ENCODE measurements at regions of chr9 and their contacts with region 1.

Region 1: GRCh38 chr9:132240753-132241493 is 79.1 kb downstream of the NTNG2 start:
- DNase-seq: peak; percentile 96 to 99
- H3K4me3 ChIP-seq: peak overlapping the region; percentile 55 to 78 (median 56)
- H3K27ac ChIP-seq: no peak overlapping the region
- H3K4me1 ChIP-seq: peaks cover 2 to 27% (median 17%) of the 10 kb centered on the region in 4 experiments
- H3K27me3 ChIP-seq: peaks cover 0 to 20% (median 15%) of the 10 kb centered on the region in 4 experiments; a peak in 6 of 7 replicates
- CTCF ChIP-seq: no peak
- EP300 ChIP-seq: no peak
- POLR2A ChIP-seq: peak in 1 of 2 experiments; percentile 26; a peak in 1 of 3 replicates
- RAD21 ChIP-seq: no peak

Region 2: GRCh38 chr9:132154863-132155309 is 86.0 kb before region 1 on chr9:
- CTCF ChIA-PET with region 1: interaction called, 12 read pairs
- POLR2A ChIA-PET with region 1: no interaction called
- DNase-seq: no peak
- H3K4me3 ChIP-seq: no peak overlapping the region
- H3K27ac ChIP-seq: no peak overlapping the region
- H3K4me1 ChIP-seq: peaks cover 0 to 12% (median 6%) of the 10 kb centered on the region in 4 experiments; a peak in 5 of 7 replicates
- H3K27me3 ChIP-seq: peaks cover 0 to 14% (median 3%) of the 10 kb centered on the region in 4 experiments; a peak in 5 of 7 replicates
- CTCF ChIP-seq: no peak
- EP300 ChIP-seq: no peak
- POLR2A ChIP-seq: no peak
- RAD21 ChIP-seq: no peak; a peak in 1 of 4 replicates

Region 3: GRCh38 chr9:132175431-132175830 is 65.5 kb before region 1 on chr9:
- CTCF ChIA-PET with region 1: interaction called, 370 read pairs
- POLR2A ChIA-PET with region 1: no interaction called
- DNase-seq: no peak
- H3K4me3 ChIP-seq: no peak overlapping the region
- H3K27ac ChIP-seq: no peak overlapping the region
- H3K4me1 ChIP-seq: no peaks in the 10 kb centered on the region; a peak in 1 of 7 replicates
- H3K27me3 ChIP-seq: no peaks in the 10 kb centered on the region
- CTCF ChIP-seq: no peak
- EP300 ChIP-seq: no peak
- POLR2A ChIP-seq: no peak
- RAD21 ChIP-seq: no peak

Region 4: GRCh38 chr9:132190966-132191365 is 50.0 kb before region 1 on chr9:
- CTCF ChIA-PET with region 1: interaction called, 10 read pairs
- POLR2A ChIA-PET with region 1: no interaction called
- DNase-seq: no peak
- H3K4me3 ChIP-seq: no peak overlapping the region
- H3K27ac ChIP-seq: no peak overlapping the region
- H3K4me1 ChIP-seq: peaks cover 0 to 22% (median 8%) of the 10 kb centered on the region in 4 experiments; a peak in 6 of 7 replicates
- H3K27me3 ChIP-seq: peaks cover 0 to 23% (median 16%) of the 10 kb centered on the region in 4 experiments; a peak in 6 of 7 replicates
- CTCF ChIP-seq: no peak
- EP300 ChIP-seq: no peak
- POLR2A ChIP-seq: no peak
- RAD21 ChIP-seq: no peak

Region 5: DNA sequence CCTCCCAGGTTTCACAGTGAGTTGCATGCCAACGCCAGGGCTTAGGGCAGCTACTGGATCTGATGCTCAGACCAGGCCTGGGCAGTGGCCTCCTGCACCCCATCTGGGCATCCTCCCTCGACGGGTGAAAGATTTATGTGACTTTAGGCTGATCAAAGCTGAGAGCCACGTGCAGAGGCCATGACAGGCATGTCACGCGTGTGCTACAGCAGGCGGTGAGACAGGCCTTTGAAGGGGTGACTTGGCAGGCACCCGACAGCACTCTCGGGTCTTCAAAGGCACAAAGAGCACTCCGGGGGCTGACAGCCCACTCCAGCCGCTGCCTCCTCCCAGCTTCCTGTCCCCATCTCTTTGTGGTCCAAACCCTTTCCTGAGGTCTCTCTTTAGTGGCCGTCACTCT is 12.9 kb before region 1 on chr9:
- CTCF ChIA-PET with region 1: interaction called, 87 read pairs
- POLR2A ChIA-PET with region 1: interaction called, 4 read pairs
- DNase-seq: no peak
- H3K4me3 ChIP-seq: no peak overlapping the region
- H3K27ac ChIP-seq: no peak overlapping the region
- H3K4me1 ChIP-seq: no peaks in the 10 kb centered on the region; a peak in 1 of 7 replicates
- H3K27me3 ChIP-seq: no peaks in the 10 kb centered on the region
- CTCF ChIP-seq: no peak
- EP300 ChIP-seq: no peak
- POLR2A ChIP-seq: no peak
- RAD21 ChIP-seq: no peak

Measured in H1 (cell line).